ENCODE measurements at regions of chr16 and their contacts with region 1.

Region 1: DNA sequence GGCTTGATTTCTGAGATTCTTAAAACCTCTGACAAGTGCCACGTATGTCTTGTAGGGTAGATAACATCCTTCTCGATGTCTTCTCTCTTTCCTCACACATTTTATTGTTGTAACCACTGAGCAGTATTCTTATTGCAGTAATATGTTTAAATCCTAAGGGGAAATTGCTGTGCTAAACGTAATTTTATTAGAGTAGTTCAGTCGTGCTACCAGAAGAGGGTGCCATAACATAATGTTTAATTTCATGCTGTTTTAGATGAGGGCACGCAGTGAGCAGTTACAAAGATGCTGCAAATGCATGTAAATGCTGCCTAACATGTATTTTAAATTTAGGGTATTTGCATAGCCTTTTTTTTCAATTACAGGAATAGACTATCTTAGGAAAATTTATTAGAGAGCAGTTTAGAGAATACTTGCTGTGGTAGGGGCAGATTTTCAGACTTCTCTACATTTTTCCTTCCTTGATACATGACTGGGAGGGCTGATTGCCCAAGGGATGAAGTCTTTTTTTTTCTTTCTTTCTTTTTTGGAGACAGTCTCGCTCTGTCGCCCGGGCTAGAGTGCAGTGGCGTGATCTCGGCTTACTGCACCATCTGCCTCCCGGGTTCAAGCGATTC is 51.7 kb downstream of the GAN start:
- DNase-seq: peak; percentile 77
- H3K4me3 ChIP-seq: no peak overlapping the region
- H3K27ac ChIP-seq: no peak overlapping the region
- H3K4me1 ChIP-seq: peaks cover 14% of the 10 kb centered on the region
- H3K27me3 ChIP-seq: no peaks in the 10 kb centered on the region
- CTCF ChIP-seq: peak; percentile 27 to 38
- POLR2A ChIP-seq: no peak

Region 2: GRCh38 chr16:81026429-81026828 is 340.0 kb before region 1 on chr16:
- CTCF ChIA-PET with region 1: no interaction called
- POLR2A ChIA-PET with region 1: no interaction called
- dilution Hi-C with region 1: no loop called
- intact Hi-C with region 1: no loop called
- DNase-seq: no peak
- H3K4me3 ChIP-seq: no peak overlapping the region
- H3K27ac ChIP-seq: no peak overlapping the region
- H3K4me1 ChIP-seq: no peaks in the 10 kb centered on the region
- H3K27me3 ChIP-seq: no peaks in the 10 kb centered on the region
- CTCF ChIP-seq: no peak
- POLR2A ChIP-seq: no peak

Region 3: DNA sequence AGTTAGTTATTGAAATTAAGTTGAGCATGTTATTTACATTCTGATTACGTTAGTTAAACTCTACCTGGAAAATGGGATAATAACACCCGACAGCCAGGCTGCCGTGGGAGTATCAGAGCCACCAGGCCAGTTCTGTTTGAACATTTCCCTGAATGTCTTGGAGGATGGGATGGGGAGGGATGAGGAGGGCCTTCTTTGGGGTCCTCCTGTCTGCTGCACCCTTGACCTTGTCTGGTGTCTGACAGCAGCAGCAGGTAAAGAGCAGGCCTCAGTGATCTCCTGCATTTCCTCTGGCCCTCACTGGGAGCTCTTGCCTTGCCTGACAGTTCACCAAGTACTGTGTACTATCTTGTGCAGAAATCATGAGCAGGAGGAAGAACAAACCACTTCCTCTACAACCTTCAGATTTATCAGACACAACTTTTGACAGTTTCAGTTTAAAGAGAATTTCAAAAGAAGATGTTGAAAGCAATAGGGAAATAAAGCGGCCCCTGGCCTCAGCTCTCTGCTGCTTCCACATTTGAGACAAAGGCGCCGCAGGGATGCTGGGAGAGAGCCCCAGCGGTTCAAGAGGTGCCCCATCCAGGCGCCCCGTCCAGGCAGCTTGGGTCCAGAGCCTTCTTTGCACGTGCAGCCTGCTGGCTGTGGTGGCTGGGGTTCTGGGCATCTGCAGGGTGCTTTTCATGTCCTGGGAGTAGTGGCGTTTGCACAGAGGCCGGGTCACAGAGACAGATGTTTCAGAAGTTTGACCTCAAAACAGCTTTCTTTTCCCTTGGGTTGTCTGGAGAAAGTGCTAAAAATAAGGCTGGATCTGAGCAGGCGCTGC is 103.5 kb after region 1 on chr16:
- CTCF ChIA-PET with region 1: interaction called, 6 read pairs
- POLR2A ChIA-PET with region 1: no interaction called
- dilution Hi-C with region 1: loop called (anchors 25 kb)
- intact Hi-C with region 1: no loop called
- DNase-seq: no peak
- H3K4me3 ChIP-seq: no peak overlapping the region
- H3K27ac ChIP-seq: no peak overlapping the region
- H3K4me1 ChIP-seq: peaks cover 22% of the 10 kb centered on the region
- H3K27me3 ChIP-seq: no peaks in the 10 kb centered on the region
- CTCF ChIP-seq: no peak
- POLR2A ChIP-seq: no peak

Region 4: DNA sequence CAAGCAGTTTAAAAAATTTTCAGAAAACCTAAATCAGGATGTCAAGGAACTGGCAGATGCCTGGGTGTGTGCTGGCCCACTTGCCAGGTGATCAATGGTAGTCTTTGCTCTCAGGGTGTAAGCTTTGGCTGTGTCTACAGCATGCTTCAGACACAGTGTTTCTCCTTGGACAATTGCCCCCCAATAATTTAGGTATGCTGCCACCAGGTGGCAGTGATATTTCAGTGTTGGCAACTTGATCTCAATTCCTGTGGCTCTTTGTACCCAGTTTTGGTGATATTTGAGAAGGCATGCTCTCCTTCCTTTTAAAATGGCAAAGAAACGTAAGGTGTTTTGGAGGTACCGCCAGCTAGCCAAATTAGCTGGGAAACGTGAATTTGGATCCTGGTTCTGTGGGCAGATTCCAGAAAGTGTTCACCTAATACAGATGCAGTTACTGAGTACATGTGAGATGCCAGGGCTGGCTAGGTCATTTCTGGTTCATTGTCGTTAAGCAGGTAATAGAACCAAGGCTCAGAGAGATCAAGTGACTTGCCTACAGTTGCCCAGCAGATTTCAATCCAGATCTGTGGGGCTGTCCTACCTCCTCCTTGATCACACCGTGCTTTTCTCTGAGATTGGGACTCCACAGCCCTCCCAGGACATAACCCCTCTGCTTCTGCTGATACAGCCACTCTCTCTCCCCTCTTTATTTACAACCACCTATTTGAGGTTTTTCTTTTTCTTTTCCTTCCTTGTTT is 257.1 kb after region 1 on chr16:
- CTCF ChIA-PET with region 1: interaction called, 12 read pairs
- POLR2A ChIA-PET with region 1: no interaction called
- dilution Hi-C with region 1: no loop called
- intact Hi-C with region 1: loop called (anchors 1 kb)
- DNase-seq: peak; percentile 80
- H3K4me3 ChIP-seq: no peak overlapping the region
- H3K27ac ChIP-seq: no peak overlapping the region
- H3K4me1 ChIP-seq: peaks cover 31% of the 10 kb centered on the region
- H3K27me3 ChIP-seq: no peaks in the 10 kb centered on the region
- CTCF ChIP-seq: peak; percentile 57 to 59
- POLR2A ChIP-seq: no peak

Region 5: DNA sequence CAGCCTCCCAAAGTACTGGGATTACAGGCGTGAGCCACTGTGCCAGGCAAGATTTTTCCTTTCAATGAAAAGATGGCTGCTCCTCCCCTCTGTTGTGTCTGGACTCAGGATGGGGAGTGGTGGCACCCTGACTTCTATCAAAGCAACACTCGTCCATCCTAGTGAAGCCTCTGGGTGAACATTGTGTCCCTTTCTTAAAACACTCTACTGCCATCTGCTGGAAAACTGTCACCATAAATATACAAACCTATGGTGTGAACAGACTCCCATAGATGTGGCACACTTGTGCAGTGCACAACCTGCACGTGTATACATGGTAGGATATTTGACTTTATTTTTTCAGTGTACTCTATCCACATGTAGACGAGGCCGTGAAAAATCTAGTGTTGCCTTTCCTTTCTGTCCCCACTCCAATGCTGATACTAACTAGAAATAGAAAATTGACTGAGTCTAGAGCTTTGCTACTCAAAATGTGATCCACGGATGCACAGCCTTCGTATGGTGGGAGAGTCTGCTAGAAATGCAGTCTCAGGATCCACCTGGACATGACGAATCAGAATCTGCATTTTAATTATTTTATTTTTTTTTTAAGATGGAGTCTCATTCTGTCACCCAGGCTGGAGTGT is 356.8 kb after region 1 on chr16:
- CTCF ChIA-PET with region 1: interaction called, 28 read pairs
- POLR2A ChIA-PET with region 1: no interaction called
- dilution Hi-C with region 1: no loop called
- intact Hi-C with region 1: loop called (anchors 1 kb)
- DNase-seq: peak; percentile 85
- H3K4me3 ChIP-seq: no peak overlapping the region
- H3K27ac ChIP-seq: no peak overlapping the region
- H3K4me1 ChIP-seq: peaks cover 7% of the 10 kb centered on the region
- H3K27me3 ChIP-seq: peaks cover 0 to 3% of the 10 kb centered on the region in 2 experiments
- CTCF ChIP-seq: peak; percentile 47 to 53
- POLR2A ChIP-seq: no peak

Region 6: GRCh38 chr16:81873843-81874752 is 507.7 kb after region 1 on chr16:
- CTCF ChIA-PET with region 1: interaction called, 5 read pairs
- POLR2A ChIA-PET with region 1: no interaction called
- dilution Hi-C with region 1: no loop called
- intact Hi-C with region 1: loop called (anchors 5 kb)
- DNase-seq: peak; percentile 63
- H3K4me3 ChIP-seq: no peak overlapping the region
- H3K27ac ChIP-seq: no peak overlapping the region
- H3K4me1 ChIP-seq: peaks cover 11% of the 10 kb centered on the region
- H3K27me3 ChIP-seq: no peaks in the 10 kb centered on the region
- CTCF ChIP-seq: peak; percentile 76 to 81
- POLR2A ChIP-seq: no peak